ENCODE measurements at regions of chr2 and their contacts with region 1.

Region 1: DNA sequence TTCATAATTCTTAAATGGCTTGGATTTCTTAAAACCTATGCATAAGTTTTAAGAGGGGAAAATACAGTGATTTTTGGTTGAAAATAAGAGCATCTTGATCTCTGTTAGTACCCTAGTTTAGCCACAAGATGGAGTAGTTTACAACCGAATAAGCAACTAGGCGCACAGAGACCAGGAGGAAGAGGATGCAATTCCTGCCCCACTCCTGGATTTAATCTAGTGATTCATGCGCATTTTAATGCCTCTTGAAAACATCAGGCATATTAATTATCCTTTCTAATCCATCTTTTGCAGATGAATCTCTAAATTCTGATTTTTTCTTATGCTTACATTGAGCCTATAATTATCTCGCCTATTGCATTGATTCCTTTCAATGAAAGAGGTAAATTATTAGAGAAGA is 76.7 kb downstream of the MRPS9 start:
- DNase-seq: no peak
- H3K4me3 Mint-ChIP-seq: no peak overlapping the region
- H3K27ac Mint-ChIP-seq: no peak overlapping the region
- H3K4me1 Mint-ChIP-seq: no peaks in the 10 kb centered on the region
- H3K27me3 Mint-ChIP-seq: no peaks in the 10 kb centered on the region
- CTCF ChIP-seq: peak; percentile 49

Region 2: GRCh38 chr2:105179469-105180372 is 65.2 kb after region 1 on chr2:
- CTCF ChIA-PET with region 1: interaction called, 4 read pairs
- intact Hi-C with region 1: loop called (anchors 2 kb)
- DNase-seq: peak; percentile 69
- H3K4me3 Mint-ChIP-seq: no peak overlapping the region
- H3K27ac Mint-ChIP-seq: no peak overlapping the region
- H3K4me1 Mint-ChIP-seq: no peaks in the 10 kb centered on the region
- H3K27me3 Mint-ChIP-seq: peaks cover 52% of the 10 kb centered on the region
- CTCF ChIP-seq: peak; percentile 34

Region 3: DNA sequence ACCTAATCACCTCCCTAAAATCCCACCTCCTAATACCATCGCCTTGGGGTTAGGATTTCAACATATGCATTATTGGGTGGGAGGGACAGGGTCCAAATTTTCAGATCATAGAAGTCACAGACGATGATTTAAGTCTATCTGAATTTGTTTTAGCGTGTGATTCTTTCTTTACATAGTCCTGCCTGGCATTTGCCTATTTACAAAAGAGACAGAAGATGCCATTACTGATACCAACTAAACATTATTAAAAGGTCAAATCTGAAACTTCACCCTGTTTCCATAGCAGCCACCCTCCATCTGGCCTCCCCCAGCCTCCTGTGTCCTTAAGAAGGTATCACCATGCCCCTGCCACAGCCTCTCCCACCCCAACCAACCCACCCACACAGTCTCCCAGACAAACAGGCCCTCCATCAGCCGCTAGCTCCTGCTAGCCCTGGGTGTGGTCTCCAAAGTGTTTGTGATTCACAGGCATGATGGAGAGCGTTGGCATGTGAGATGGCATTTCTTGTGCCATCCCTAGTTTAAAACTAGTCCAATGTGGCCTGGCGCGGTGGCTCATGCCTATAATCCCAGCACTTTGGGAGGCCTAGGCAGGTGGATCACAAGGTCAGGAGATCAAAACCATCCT is 82.0 kb after region 1 on chr2:
- CTCF ChIA-PET with region 1: no interaction called
- intact Hi-C with region 1: no loop called
- DNase-seq: no peak
- H3K4me3 Mint-ChIP-seq: no peak overlapping the region
- H3K27ac Mint-ChIP-seq: no peak overlapping the region
- H3K4me1 Mint-ChIP-seq: no peaks in the 10 kb centered on the region
- H3K27me3 Mint-ChIP-seq: peaks cover 69% of the 10 kb centered on the region
- CTCF ChIP-seq: no peak

Region 4: DNA sequence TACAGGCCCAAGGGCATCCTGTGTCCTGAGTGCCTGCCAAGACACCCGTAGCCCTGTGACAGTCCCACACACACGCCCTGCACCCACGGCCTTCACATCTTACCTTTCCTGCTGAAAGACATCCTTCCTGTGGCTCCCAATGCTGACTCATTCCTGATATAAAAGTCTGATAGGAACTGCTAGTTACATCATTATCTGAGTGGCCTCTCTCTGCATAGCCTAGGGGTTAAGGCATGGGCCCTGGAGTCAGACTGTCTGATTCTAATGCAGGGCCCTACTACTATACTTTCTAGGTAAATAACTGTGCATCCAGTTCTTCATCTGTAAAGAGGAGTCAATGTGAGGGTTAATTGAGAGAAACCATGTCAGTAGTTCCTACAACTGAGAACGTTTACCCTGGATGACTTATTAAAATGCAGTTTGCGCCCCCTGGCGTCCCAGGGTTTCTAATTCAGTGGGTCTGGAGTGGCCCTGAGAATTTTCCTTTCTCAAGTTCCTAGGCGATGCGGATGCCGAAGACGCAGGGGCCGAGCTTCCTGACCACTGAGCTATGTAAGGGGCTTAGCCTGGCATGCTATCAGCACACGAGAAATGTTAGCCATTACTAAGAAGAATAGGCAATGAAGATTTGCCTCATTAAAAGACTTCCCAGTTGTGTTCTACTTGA is 121.0 kb after region 1 on chr2:
- CTCF ChIA-PET with region 1: interaction called, 4 read pairs
- intact Hi-C with region 1: loop called (anchors 1 kb)
- DNase-seq: peak; percentile 84
- H3K4me3 Mint-ChIP-seq: no peak overlapping the region
- H3K27ac Mint-ChIP-seq: no peak overlapping the region
- H3K4me1 Mint-ChIP-seq: peaks cover 9% of the 10 kb centered on the region
- H3K27me3 Mint-ChIP-seq: peaks cover 19% of the 10 kb centered on the region
- CTCF ChIP-seq: peak; percentile 61

Region 5: DNA sequence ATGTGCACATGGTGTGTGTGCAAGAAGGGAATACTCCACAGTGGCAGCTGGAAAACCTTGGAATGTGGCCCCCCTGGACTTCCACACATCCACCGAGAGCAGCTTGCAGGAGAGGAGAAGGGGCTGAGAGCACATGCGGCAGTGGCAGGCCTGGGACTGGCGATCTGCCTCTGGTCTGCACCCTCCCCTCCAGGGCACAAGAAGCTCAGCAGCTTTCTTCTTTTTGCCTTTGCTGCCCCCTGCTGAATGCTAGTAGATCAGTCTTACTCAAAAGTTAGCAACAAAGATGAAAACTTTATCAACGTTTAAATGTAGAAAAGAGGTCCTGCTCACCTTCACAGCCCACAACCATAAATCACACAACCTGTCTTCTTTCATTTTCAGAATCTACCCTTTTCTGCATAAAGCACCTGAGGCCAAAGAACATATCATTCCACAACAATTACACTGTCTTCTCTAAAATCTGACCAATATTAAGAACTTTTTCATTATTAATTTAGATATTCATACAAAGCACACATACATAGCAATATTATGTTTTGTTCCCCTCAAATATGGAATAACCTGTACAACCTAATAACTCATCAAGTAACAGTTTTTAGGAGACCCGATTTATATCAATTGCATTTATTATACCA is 180.4 kb after region 1 on chr2:
- CTCF ChIA-PET with region 1: no interaction called
- intact Hi-C with region 1: loop called (anchors 10 kb)
- DNase-seq: peak; percentile 61
- H3K4me3 Mint-ChIP-seq: no peak overlapping the region
- H3K27ac Mint-ChIP-seq: no peak overlapping the region
- H3K4me1 Mint-ChIP-seq: no peaks in the 10 kb centered on the region
- H3K27me3 Mint-ChIP-seq: no peaks in the 10 kb centered on the region
- CTCF ChIP-seq: peak; percentile 54

Region 6: DNA sequence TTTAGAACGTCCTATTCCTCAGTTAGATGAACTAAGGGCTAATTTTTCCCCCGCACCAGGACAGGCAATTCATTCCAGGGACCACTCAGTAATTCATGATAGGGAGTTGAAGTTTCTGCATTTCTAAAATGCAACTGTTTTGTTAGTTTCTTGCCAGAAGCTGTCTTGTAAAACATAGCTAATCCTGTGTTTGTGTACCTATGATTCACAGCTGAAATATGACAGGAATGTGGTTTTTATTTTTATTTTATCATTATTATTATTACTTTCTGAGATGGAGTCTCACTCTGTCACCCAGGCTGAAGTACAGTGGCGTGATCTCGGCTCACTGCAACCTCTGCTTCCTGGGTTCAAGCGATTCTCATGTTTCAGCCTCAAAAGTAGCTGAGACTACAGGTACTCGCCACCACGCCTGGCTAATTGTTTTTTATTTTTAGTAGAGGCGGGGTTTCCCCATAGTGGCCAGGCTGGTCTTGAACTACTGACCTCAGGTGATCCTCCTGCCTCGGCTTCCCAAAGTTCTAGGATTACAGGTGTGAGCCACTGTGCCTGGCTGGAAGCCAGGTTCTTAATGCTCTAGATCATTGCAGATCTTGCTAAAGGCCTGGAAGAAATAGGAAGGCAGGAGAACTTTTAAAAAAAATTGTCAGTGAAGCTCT is 439.1 kb after region 1 on chr2:
- CTCF ChIA-PET with region 1: no interaction called
- intact Hi-C with region 1: loop called (anchors 5 kb)
- DNase-seq: peak; percentile 45
- H3K4me3 Mint-ChIP-seq: no peak overlapping the region
- H3K27ac Mint-ChIP-seq: no peak overlapping the region
- H3K4me1 Mint-ChIP-seq: peaks cover 19% of the 10 kb centered on the region
- H3K27me3 Mint-ChIP-seq: peaks cover 43% of the 10 kb centered on the region
- CTCF ChIP-seq: no peak

Measured in Calu3 (cell line).